Panc1 (cell line): ENCODE measurements at regions of chr5 and their contacts with region 1.

Region 1: DNA sequence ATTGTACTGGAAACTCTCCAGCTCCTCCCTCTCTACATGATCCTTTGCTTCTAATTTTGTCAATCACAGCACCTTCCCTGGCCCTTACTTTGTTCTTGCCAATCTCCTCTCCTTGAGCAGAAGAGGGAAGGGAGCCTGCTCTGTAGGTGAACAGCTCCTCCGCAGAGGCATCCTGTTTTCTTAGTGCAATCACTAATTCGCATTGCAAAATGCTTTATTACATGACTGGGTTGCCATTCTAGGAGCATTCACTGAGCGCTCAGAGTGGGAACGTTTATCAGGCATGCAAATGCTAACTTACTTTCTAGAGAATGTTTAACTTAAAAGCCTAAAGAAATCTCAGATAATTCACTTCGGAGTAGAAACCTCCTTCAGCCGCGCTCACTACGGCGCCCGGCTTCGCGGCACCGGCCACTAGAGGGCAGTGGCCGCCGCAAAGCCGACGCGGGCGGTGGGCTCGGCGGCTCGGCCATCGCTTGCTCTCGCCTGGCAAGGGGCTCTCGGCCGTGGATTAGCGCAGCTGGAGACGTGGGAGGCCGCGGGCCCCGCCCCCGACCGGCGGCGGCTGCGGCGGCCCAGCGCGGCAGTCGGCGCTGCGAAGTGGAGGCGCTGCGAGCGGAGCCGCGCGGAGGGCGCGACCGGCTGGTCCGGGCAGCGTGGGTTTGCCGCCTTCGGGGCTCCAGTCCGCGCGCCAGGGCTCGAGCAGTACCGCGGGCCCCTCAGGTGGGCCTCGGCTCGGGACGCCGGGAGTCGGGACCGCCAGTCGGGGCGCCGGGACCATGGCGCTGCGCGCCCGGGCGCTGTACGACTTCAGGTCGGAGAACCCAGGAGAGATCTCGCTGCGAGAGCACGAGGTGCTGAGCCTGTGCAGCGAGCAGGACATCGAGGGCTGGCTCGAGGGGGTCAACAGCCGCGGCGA is at the start of gene SNX18:
- DNase-seq: peak; percentile 41
- ATAC-seq: peak; percentile 93
- H3K4me3 ChIP-seq: peak within 1 kb of the TSS; percentile 72 to 78
- H3K27ac ChIP-seq: peak within 1 kb of the TSS; percentile 54
- H3K4me1 ChIP-seq: peaks cover 21% of the 10 kb centered on the region
- H3K27me3 ChIP-seq: no peaks in the 10 kb centered on the region
- CTCF ChIP-seq: peak; percentile 99
- total RNA-seq, gene SNX18: 14.4 TPM

Region 2: GRCh38 chr5:54541823-54542783 is 24.7 kb after region 1 on chr5:
- CTCF ChIA-PET with region 1: no interaction called
- POLR2A ChIA-PET with region 1: no interaction called
- in situ Hi-C with region 1: no loop called
- intact Hi-C with region 1: no loop called
- DNase-seq: no peak
- ATAC-seq: no peak
- H3K4me3 ChIP-seq: no peak overlapping the region
- H3K27ac ChIP-seq: no peak overlapping the region
- H3K4me1 ChIP-seq: no peaks in the 10 kb centered on the region
- H3K27me3 ChIP-seq: no peaks in the 10 kb centered on the region
- CTCF ChIP-seq: no peak

Region 3: GRCh38 chr5:54785729-54786591 is 268.5 kb after region 1 on chr5:
- CTCF ChIA-PET with region 1: no interaction called
- POLR2A ChIA-PET with region 1: no interaction called
- in situ Hi-C with region 1: no loop called
- intact Hi-C with region 1: no loop called
- DNase-seq: no peak
- ATAC-seq: no peak
- H3K4me3 ChIP-seq: no peak overlapping the region
- H3K27ac ChIP-seq: no peak overlapping the region
- H3K4me1 ChIP-seq: no peaks in the 10 kb centered on the region
- H3K27me3 ChIP-seq: no peaks in the 10 kb centered on the region
- CTCF ChIP-seq: no peak

Region 4: DNA sequence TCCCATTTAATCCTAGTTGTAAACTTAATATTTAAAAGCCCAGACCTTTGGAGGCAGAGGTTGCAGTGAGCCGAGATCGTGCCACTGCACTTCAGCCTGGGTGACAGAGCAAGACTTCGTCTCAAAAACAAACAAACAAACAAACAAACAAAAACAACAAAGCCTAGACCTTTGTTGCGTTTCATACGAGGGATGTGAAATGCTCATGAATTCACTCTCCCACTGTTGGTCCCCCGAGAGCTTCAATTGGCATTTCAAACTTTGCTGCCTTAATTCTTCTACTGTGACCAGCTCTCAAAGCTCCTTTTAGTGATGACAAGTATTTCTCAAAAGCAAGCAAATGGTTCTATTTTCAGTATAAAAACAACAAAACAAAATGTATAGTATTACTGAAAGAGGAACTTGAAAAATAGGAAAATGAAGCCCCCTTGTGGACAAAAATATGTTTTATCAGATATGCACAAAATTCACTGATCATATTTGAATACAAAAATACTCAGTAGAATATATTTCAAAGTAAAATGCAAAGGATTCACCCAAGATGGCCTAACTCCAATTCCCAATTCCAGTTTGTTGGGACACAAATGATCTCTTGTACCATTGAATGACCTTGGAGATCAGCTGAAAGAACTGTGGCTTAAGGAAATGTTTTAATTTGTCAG is 327.6 kb after region 1 on chr5:
- CTCF ChIA-PET with region 1: interaction called, 15 read pairs
- POLR2A ChIA-PET with region 1: no interaction called
- in situ Hi-C with region 1: no loop called
- intact Hi-C with region 1: loop called (anchors 1 kb)
- DNase-seq: peak; percentile 8
- ATAC-seq: no peak
- H3K4me3 ChIP-seq: no peak overlapping the region
- H3K27ac ChIP-seq: no peak overlapping the region
- H3K4me1 ChIP-seq: no peaks in the 10 kb centered on the region
- H3K27me3 ChIP-seq: no peaks in the 10 kb centered on the region
- CTCF ChIP-seq: peak; percentile 49; the same call in 1 of the 2 replicates

Region 5: GRCh38 chr5:54867310-54867944 is 350.0 kb after region 1 on chr5:
- CTCF ChIA-PET with region 1: interaction called, 25 read pairs
- POLR2A ChIA-PET with region 1: no interaction called
- in situ Hi-C with region 1: no loop called
- intact Hi-C with region 1: loop called (anchors 1 kb)
- DNase-seq: peak; percentile 18
- ATAC-seq: no peak
- H3K4me3 ChIP-seq: no peak overlapping the region
- H3K27ac ChIP-seq: no peak overlapping the region
- H3K4me1 ChIP-seq: no peaks in the 10 kb centered on the region
- H3K27me3 ChIP-seq: peaks cover 17% of the 10 kb centered on the region
- CTCF ChIP-seq: peak; percentile 71

Region 6: GRCh38 chr5:55159763-55160492 is 642.5 kb after region 1 on chr5 and contains the start of gene GPX8:
- CTCF ChIA-PET with region 1: interaction called, 7 read pairs
- POLR2A ChIA-PET with region 1: no interaction called
- in situ Hi-C with region 1: no loop called
- intact Hi-C with region 1: loop called (anchors 5 kb)
- DNase-seq: peak; percentile 73
- ATAC-seq: peak; percentile 96
- H3K4me3 ChIP-seq: peak within 1 kb of the TSS; percentile 70 to 82
- H3K27ac ChIP-seq: peak within 1 kb of the TSS; percentile 98
- H3K4me1 ChIP-seq: peaks cover 5% of the 10 kb centered on the region; the same call in 1 of the 2 replicates
- H3K27me3 ChIP-seq: no peaks in the 10 kb centered on the region; the same call in 1 of the 2 replicates
- CTCF ChIP-seq: peak; percentile 75
- total RNA-seq, gene GPX8: 24.8 TPM